ENCODE measurements at regions of chr11 and their contacts with region 1.

Region 1: GRCh38 chr11:21018248-21018647 is 348.9 kb downstream of the NELL1 start:
- DNase-seq: no peak
- H3K4me3 ChIP-seq: no peak overlapping the region
- CTCF ChIP-seq: no peak
- POLR2A ChIP-seq: no peak

Region 2: GRCh38 chr11:20963596-20963995 is 54.7 kb before region 1 on chr11:
- intact Hi-C with region 1: loop called (anchors 2 kb)
- DNase-seq: no peak
- H3K4me3 ChIP-seq: no peak overlapping the region
- CTCF ChIP-seq: no peak
- POLR2A ChIP-seq: no peak

Region 3: GRCh38 chr11:20991471-20991870 is 26.8 kb before region 1 on chr11:
- intact Hi-C with region 1: no loop called
- DNase-seq: no peak
- H3K4me3 ChIP-seq: no peak overlapping the region
- CTCF ChIP-seq: no peak
- POLR2A ChIP-seq: no peak

Region 4: DNA sequence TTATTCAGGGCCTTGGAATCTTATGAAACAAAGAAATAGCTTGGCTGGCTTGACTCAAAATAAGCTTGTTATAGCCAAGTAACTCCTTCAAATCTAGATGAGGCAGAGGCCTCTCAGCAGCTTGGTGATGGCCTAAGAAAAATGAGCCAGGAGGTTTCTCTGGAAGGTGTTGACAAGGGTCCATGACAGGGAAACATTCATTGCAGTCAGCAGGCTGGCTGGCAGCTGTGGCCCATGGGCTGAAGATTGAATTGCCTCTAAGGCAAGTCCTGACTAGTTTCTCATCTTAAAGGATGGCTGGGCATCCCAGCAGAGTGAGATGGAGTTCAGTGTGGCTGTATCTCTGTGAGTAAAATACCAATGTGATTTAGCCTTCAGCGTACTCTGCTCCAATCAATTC is 92.2 kb after region 1 on chr11:
- intact Hi-C with region 1: no loop called
- DNase-seq: no peak
- H3K4me3 ChIP-seq: no peak overlapping the region
- CTCF ChIP-seq: no peak
- POLR2A ChIP-seq: no peak